Activated CD8-positive, alpha-beta T cell treated with anti-CD3 and anti-CD28 coated beads for 36 hours (primary cell): ENCODE measurements at regions of chr6 and their contacts with region 1.

Region 1: DNA sequence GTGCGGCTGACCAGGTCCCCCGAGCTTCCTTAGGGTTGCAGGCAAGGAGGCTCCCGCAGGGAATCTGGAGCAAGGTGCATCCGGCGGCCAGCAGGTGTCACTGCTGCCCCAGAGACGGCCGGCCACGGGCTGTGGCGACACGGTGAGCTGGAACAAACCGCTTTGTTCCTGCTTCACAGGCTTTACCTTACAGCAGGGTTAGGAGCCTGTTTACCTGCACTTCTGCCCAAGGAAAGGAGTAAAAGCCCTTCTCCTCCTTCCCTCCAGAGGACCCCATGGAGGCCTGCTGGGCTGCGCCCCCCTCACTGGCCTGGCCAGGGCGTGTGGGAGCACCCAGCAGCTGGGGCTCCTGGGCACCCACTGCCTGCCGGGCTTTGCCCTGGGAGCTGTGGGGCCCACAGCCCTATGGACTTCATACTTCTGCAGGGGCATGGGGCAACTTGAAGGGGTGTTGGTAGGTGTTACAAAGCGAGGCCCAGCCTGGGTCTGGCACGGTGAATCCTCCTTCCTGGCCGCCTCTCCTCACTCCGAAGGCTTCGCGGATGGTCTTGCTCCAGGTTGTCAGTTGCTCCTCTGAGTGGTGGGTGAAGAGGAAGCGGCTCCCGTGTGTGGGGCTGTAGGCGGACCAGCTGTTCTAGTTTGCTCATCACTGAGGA is 88.4 kb downstream of the CDC5L start:
- DNase-seq: peak; percentile 77
- ATAC-seq: peak; percentile 92
- H3K4me3 Mint-ChIP-seq: no peak overlapping the region
- H3K27ac Mint-ChIP-seq: no peak overlapping the region
- H3K4me1 Mint-ChIP-seq: no peaks in the 10 kb centered on the region
- H3K27me3 Mint-ChIP-seq: no peaks in the 10 kb centered on the region
- CTCF ChIP-seq: peak; percentile 92

Region 2: GRCh38 chr6:44456070-44456965 is 19.6 kb before region 1 on chr6:
- CTCF ChIA-PET with region 1: interaction called, 50 read pairs
- POLR2A ChIA-PET with region 1: no interaction called
- intact Hi-C with region 1: no loop called
- DNase-seq: peak; percentile 46
- ATAC-seq: peak; percentile 87
- H3K4me3 Mint-ChIP-seq: no peak overlapping the region
- H3K27ac Mint-ChIP-seq: no peak overlapping the region
- H3K4me1 Mint-ChIP-seq: peaks cover 1% of the 10 kb centered on the region
- H3K27me3 Mint-ChIP-seq: peaks cover 6% of the 10 kb centered on the region
- CTCF ChIP-seq: peak; percentile 85

Region 3: GRCh38 chr6:44489910-44490604 is 14.2 kb after region 1 on chr6:
- CTCF ChIA-PET with region 1: interaction called, 24 read pairs
- POLR2A ChIA-PET with region 1: interaction called, 3 read pairs
- intact Hi-C with region 1: no loop called
- DNase-seq: no peak
- ATAC-seq: no peak
- H3K4me3 Mint-ChIP-seq: no peak overlapping the region
- H3K27ac Mint-ChIP-seq: no peak overlapping the region
- H3K4me1 Mint-ChIP-seq: no peaks in the 10 kb centered on the region
- H3K27me3 Mint-ChIP-seq: peaks cover 4% of the 10 kb centered on the region
- CTCF ChIP-seq: no peak

Region 4: DNA sequence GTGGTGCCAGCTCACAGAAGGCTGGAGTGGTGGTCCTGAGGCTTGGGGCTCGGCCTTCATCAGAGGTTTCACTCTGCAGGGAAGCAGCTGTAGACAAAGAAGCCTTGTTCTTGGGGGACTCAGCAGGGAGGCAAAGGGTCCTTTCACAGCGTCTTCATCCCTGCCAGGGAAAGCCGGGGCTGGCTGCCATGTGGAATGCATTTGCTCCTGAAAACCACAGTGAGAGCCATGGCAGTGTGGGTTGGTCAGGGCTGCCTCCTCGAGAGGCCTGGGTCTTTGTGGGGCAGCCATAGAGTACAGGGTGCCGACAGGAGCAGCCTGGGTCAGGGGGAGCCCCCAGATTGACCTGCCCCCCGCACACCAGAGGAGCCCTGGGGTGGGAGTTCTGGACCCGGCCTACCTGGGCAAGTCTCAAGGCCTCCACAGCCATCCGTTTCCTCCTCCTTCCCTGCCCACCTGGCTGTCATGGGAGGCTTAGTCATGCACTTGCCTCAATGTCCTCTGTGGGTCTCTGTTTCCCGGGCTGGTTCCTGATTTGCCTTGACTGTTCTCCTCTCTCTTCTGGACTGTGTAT is 55.6 kb after region 1 on chr6:
- CTCF ChIA-PET with region 1: interaction called, 16 read pairs
- POLR2A ChIA-PET with region 1: no interaction called
- intact Hi-C with region 1: no loop called
- DNase-seq: no peak
- ATAC-seq: no peak
- H3K4me3 Mint-ChIP-seq: no peak overlapping the region
- H3K27ac Mint-ChIP-seq: no peak overlapping the region
- H3K4me1 Mint-ChIP-seq: peaks cover 16% of the 10 kb centered on the region
- H3K27me3 Mint-ChIP-seq: peaks cover 8% of the 10 kb centered on the region
- CTCF ChIP-seq: no peak

Region 5: GRCh38 chr6:44569931-44570385 is 94.1 kb after region 1 on chr6:
- CTCF ChIA-PET with region 1: interaction called, 21 read pairs
- POLR2A ChIA-PET with region 1: no interaction called
- intact Hi-C with region 1: loop called (anchors 10 kb)
- DNase-seq: no peak
- ATAC-seq: no peak
- H3K4me3 Mint-ChIP-seq: no peak overlapping the region
- H3K27ac Mint-ChIP-seq: no peak overlapping the region
- H3K4me1 Mint-ChIP-seq: no peaks in the 10 kb centered on the region
- H3K27me3 Mint-ChIP-seq: peaks cover 2% of the 10 kb centered on the region
- CTCF ChIP-seq: no peak

Region 6: GRCh38 chr6:44630125-44631028 is 154.5 kb after region 1 on chr6:
- CTCF ChIA-PET with region 1: interaction called, 22 read pairs
- POLR2A ChIA-PET with region 1: no interaction called
- intact Hi-C with region 1: no loop called
- DNase-seq: peak; percentile 50
- ATAC-seq: peak; percentile 56
- H3K4me3 Mint-ChIP-seq: no peak overlapping the region
- H3K27ac Mint-ChIP-seq: no peak overlapping the region
- H3K4me1 Mint-ChIP-seq: peaks cover 6% of the 10 kb centered on the region
- H3K27me3 Mint-ChIP-seq: no peaks in the 10 kb centered on the region
- CTCF ChIP-seq: peak; percentile 39

Region 7: DNA sequence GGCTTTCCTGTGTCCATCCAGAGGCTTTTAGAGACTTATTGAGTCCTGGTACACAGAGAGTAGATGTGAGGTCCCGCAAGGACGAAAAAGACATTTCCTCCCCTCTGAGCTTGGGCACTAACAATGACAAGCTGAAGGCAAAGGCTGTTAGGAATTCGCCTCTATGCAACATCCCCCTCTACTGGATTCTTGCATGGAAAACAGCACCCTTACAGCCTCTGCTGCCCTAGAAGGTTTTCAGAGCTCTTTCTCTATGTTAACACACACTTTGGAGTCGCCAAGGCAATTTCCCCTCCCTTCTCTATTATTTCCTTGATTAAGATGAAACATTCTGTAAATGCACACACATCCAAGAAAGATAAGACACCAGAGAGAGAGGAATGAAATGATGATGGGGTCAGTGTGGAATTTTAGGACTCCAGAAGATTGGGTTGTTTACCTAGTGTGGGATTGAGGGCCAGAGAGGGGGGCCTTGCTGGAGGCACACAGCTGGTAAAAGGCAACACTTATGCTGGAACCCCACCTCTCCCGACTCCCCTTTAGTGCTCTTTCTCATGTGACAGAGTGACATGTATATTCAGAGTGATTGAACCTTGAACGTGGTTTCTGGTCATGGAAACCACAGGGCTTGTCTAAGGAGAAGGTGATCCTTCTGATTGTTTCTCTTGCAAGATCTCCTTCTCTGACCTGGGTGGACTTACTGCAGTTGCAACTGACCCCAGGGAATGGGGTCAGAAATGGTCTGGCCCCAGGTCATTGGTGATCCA is 1239.0 kb after region 1 on chr6:
- CTCF ChIA-PET with region 1: interaction called, 15 read pairs
- POLR2A ChIA-PET with region 1: no interaction called
- intact Hi-C with region 1: no loop called
- DNase-seq: peak; percentile 62
- ATAC-seq: peak; percentile 37
- H3K4me3 Mint-ChIP-seq: no peak overlapping the region
- H3K27ac Mint-ChIP-seq: peak overlapping the region; percentile 90
- H3K4me1 Mint-ChIP-seq: peaks cover 61% of the 10 kb centered on the region
- H3K27me3 Mint-ChIP-seq: no peaks in the 10 kb centered on the region
- CTCF ChIP-seq: peak; percentile 63